ENCODE measurements at regions of chr3 and their contacts with region 1.

Region 1: DNA sequence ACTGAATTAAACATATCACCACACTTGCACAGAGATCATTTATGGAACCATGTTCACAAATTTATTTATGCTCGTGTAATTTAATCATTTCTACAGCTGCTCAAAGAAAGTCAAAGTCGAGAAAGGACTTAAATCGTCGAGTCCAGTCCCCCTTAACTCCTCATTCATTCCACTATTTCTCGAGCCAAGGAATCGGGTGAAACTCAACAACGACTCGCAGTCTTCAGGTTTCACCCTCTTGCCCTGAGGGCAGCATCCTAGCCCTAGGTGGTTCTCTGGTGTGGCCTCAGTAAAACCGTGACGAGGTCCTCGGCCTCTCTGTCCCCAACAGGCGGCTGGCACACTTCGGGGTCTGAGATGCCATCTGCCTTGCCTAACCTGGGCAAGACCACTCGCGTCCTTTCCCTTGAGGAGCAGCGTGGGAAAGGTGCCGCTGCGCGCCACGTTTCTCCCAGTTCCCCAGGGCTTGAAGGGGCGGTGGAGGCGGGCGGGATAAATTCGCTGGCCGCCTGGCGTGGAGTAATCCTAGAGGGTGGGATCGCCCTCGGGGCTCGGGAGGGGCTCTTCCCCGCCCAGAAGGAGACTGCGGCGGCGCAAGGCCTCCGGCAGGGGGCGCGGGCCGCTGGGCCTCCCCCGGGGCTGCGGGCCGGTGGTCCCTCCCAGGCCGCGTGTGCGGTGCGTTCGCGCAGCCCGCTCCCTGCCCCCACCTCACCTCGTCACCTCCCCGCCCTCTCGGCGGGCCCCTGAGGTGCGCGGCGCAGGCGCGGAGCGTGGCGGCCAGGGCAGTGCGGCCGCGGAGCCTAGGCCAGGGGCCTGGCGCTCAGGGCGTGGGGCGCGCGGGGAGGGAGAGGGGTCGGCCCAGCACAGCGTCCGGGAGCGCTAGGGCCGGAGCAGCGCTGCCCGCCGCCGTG is at the start of gene ZNF639:
- DNase-seq: peak; percentile 86
- ATAC-seq: peak; percentile 89
- H3K4me3 Mint-ChIP-seq: peak within 1 kb of the TSS; percentile 94
- H3K27ac Mint-ChIP-seq: peak within 1 kb of the TSS; percentile 94
- H3K4me1 Mint-ChIP-seq: peaks cover 32% of the 10 kb centered on the region
- H3K27me3 Mint-ChIP-seq: no peaks in the 10 kb centered on the region
- CTCF ChIP-seq: peak; percentile 87
- total RNA-seq, gene ZNF639: 35.1 to 35.4 TPM

Region 2: DNA sequence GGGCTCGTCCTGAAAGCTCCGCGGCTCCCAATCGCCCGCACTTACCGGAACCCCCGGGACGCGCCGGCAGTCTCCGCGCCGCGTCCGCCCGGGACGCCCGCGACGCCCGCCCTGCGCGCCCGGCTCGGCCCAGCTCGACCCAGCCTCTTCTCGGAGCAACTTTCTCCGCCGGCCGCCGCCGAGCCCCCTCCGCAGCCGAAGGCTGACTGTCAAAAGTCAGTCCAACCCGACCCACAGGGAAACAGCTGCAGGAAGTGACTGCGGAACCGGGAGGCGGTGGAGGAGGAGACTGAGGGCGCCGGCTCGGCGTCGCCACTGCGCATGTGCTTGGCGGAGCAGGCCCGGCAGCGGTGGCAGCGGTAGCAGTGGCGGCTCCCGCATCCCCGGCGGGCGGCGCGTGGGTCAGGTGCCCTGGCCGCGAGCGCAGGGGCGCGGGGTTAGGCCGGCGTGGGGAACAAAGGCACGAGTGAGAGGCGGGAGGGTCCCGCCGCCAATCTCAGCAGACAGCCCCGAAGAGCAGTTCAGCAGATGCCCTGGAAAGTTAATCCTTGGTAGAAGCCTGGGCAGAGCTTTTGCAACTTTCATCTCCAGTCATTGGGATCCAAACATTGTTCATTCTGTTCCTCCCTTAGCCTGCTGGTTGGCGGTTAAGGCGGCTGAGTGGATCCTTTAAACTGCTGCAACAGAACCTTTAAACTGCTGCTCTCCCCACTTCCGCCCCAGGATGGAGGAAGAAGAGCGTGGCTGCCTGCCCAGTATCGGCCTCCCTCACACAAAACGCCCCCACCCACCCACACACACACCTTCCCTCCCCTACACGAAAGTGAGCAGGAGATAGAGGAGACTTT is 250.8 kb before region 1 on chr3 and contains the start of gene ZMAT3:
- CTCF ChIA-PET with region 1: interaction called, 28 read pairs
- POLR2A ChIA-PET with region 1: interaction called, 15 read pairs
- intact Hi-C with region 1: loop called (anchors 2 kb)
- DNase-seq: peak; percentile 85
- ATAC-seq: peak; percentile 85
- H3K4me3 Mint-ChIP-seq: peak within 1 kb of the TSS; percentile 97
- H3K27ac Mint-ChIP-seq: peak within 1 kb of the TSS; percentile 93
- H3K4me1 Mint-ChIP-seq: peaks cover 20% of the 10 kb centered on the region
- H3K27me3 Mint-ChIP-seq: no peaks in the 10 kb centered on the region
- CTCF ChIP-seq: no peak
- total RNA-seq, gene ZMAT3: 14.6 to 15.9 TPM

Region 3: DNA sequence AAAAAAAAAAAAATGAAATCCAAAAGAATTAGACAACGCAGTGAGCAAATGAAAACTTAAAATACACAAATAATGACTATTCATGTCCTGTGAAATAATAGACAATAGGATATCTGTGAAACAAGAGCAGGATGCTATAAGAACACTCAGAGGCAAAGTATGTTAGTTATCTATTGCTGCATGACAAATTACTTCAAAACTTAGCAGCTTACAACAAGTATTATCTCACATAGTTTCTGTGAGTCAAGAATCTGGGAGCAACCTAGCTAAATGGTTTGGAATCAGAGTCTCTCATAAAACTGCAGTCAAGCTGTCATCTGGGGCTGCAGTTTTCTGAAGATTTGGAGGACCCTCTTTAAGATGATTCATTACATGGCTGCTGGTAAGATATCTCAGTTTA is 214.5 kb before region 1 on chr3:
- CTCF ChIA-PET with region 1: interaction called, 15 read pairs
- POLR2A ChIA-PET with region 1: interaction called, 3 read pairs
- intact Hi-C with region 1: no loop called
- DNase-seq: no peak
- ATAC-seq: no peak
- H3K4me3 Mint-ChIP-seq: no peak overlapping the region
- H3K27ac Mint-ChIP-seq: no peak overlapping the region
- H3K4me1 Mint-ChIP-seq: no peaks in the 10 kb centered on the region
- H3K27me3 Mint-ChIP-seq: peaks cover 8% of the 10 kb centered on the region
- CTCF ChIP-seq: no peak

Region 4: GRCh38 chr3:179147873-179148615 is 174.5 kb before region 1 on chr3 and contains the start of gene PIK3CA:
- CTCF ChIA-PET with region 1: interaction called, 12 read pairs
- POLR2A ChIA-PET with region 1: interaction called, 22 read pairs
- intact Hi-C with region 1: no loop called
- DNase-seq: peak; percentile 96
- ATAC-seq: peak; percentile 83
- H3K4me3 Mint-ChIP-seq: peak within 1 kb of the TSS; percentile 99
- H3K27ac Mint-ChIP-seq: peak within 1 kb of the TSS; percentile 99
- H3K4me1 Mint-ChIP-seq: peaks cover 39% of the 10 kb centered on the region
- H3K27me3 Mint-ChIP-seq: peaks cover 4% of the 10 kb centered on the region
- CTCF ChIP-seq: no peak
- total RNA-seq, gene PIK3CA: 14.1 to 20.8 TPM

Region 5: GRCh38 chr3:179347345-179348194 is 25.0 kb after region 1 on chr3 and contains the start of gene MFN1:
- CTCF ChIA-PET with region 1: interaction called, 7 read pairs
- POLR2A ChIA-PET with region 1: interaction called, 20 read pairs
- intact Hi-C with region 1: no loop called
- DNase-seq: peak; percentile 95
- ATAC-seq: peak; percentile 96
- H3K4me3 Mint-ChIP-seq: peak within 1 kb of the TSS; percentile 98
- H3K27ac Mint-ChIP-seq: peak within 1 kb of the TSS; percentile 92
- H3K4me1 Mint-ChIP-seq: peaks cover 11% of the 10 kb centered on the region
- H3K27me3 Mint-ChIP-seq: no peaks in the 10 kb centered on the region
- CTCF ChIP-seq: no peak
- total RNA-seq, gene MFN1: 31.9 to 34.8 TPM

Region 6: DNA sequence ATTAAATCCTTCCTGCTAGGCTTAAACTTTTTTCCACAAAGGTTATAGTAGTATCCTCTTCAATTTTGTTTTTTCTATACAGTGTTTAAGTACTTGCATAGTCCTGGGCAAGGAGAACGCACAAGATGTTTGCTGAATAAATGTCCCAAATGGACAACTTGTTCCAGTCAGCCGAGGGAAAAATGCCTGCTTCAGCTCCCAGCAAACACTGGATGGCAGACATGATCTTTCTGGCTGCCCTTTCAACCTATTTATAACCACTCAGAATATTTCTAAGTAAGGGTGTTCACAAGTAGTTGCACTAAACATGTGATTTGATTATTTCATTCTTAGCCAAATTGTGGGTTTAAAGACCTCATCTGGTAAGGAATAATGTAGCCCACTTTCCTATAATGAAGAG is 99.0 kb after region 1 on chr3:
- CTCF ChIA-PET with region 1: no interaction called
- POLR2A ChIA-PET with region 1: no interaction called
- intact Hi-C with region 1: no loop called
- DNase-seq: no peak
- ATAC-seq: no peak
- H3K4me3 Mint-ChIP-seq: no peak overlapping the region
- H3K27ac Mint-ChIP-seq: no peak overlapping the region
- H3K4me1 Mint-ChIP-seq: no peaks in the 10 kb centered on the region
- H3K27me3 Mint-ChIP-seq: no peaks in the 10 kb centered on the region
- CTCF ChIP-seq: no peak

Region 7: DNA sequence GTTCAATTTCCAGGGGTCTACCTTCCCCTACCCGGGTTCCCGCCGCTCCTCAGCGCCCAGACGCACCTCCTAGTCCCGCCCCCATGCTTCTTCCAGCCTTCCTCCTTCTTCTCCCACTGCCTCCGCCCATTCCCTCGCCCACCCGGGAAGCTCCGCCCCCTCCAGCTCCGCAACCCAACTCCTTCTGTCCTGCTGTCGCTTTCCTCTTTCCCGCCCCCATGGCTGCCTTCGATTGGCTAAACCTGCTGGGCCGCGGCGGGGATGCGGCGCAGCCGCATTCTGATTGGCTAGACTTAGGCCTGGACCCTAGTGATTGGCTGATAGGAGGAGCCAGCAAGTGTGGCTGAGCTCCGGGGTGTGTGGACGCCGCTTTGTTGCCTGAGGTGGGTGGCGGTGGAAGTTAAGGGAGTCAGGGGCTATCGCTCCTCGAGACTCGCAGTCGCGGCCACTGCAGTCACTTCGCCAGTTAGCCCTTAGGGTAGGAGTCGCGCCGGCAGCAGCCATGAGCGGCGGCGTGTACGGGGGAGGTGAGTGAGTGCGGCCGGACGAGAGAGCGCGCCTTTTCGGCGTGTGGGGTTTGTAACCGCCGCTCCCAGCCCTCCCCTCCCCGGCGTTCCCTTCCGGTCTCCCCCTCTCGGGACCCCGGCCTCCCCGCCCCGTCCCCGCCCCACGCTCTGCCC is 240.2 kb after region 1 on chr3 and contains the start of gene ACTL6A:
- CTCF ChIA-PET with region 1: interaction called, 4 read pairs
- POLR2A ChIA-PET with region 1: interaction called, 5 read pairs
- intact Hi-C with region 1: loop called (anchors 5 kb)
- DNase-seq: peak; percentile 99
- ATAC-seq: peak; percentile 91
- H3K4me3 Mint-ChIP-seq: peak within 1 kb of the TSS; percentile 86
- H3K27ac Mint-ChIP-seq: peak within 1 kb of the TSS; percentile 99
- H3K4me1 Mint-ChIP-seq: peaks cover 28% of the 10 kb centered on the region
- H3K27me3 Mint-ChIP-seq: peaks cover 3% of the 10 kb centered on the region
- CTCF ChIP-seq: no peak
- total RNA-seq, gene ACTL6A: 87.1 to 88.4 TPM

Measured in activated CD8-positive, alpha-beta T cell treated with anti-CD3 and anti-CD28 coated beads for 36 hours (primary cell).